ENCODE measurements at regions of chr22 and their contacts with region 1.

Region 1: GRCh38 chr22:39532215-39533071 is at the start of gene RPS19BP1:
- DNase-seq: peak; percentile 100
- H3K4me3 Mint-ChIP-seq: peak within 1 kb of the TSS; percentile 94
- H3K27ac Mint-ChIP-seq: peak within 1 kb of the TSS; percentile 86
- H3K4me1 Mint-ChIP-seq: peaks cover 59% of the 10 kb centered on the region
- H3K27me3 Mint-ChIP-seq: no peaks in the 10 kb centered on the region
- total RNA-seq, gene RPS19BP1: 54.3 to 60.7 TPM

Region 2: GRCh38 chr22:39490135-39490798 is 42.2 kb before region 1 on chr22:
- CTCF ChIA-PET with region 1: interaction called, 210 read pairs
- POLR2A ChIA-PET with region 1: interaction called, 23 read pairs
- DNase-seq: peak; percentile 82
- H3K4me3 Mint-ChIP-seq: no peak overlapping the region
- H3K27ac Mint-ChIP-seq: no peak overlapping the region
- H3K4me1 Mint-ChIP-seq: peaks cover 14% of the 10 kb centered on the region
- H3K27me3 Mint-ChIP-seq: peaks cover 2% of the 10 kb centered on the region

Region 3: GRCh38 chr22:39502109-39502788 is 30.2 kb before region 1 on chr22 and contains the start of gene MIEF1:
- CTCF ChIA-PET with region 1: interaction called, 210 read pairs
- POLR2A ChIA-PET with region 1: interaction called, 124 read pairs
- DNase-seq: peak; percentile 94
- H3K4me3 Mint-ChIP-seq: peak within 1 kb of the TSS; percentile 91
- H3K27ac Mint-ChIP-seq: peak within 1 kb of the TSS; percentile 92
- H3K4me1 Mint-ChIP-seq: peaks cover 41% of the 10 kb centered on the region
- H3K27me3 Mint-ChIP-seq: peaks cover 10% of the 10 kb centered on the region
- total RNA-seq, gene MIEF1: 32.4 to 32.6 TPM

Region 4: GRCh38 chr22:39520054-39520891 is 12.2 kb before region 1 on chr22 and contains the start of gene ATF4:
- CTCF ChIA-PET with region 1: interaction called, 65 read pairs
- POLR2A ChIA-PET with region 1: interaction called, 121 read pairs
- DNase-seq: peak; percentile 97
- H3K4me3 Mint-ChIP-seq: peak within 1 kb of the TSS; percentile 94
- H3K27ac Mint-ChIP-seq: peak within 1 kb of the TSS; percentile 99
- H3K4me1 Mint-ChIP-seq: peaks cover 58% of the 10 kb centered on the region
- H3K27me3 Mint-ChIP-seq: peaks cover 2% of the 10 kb centered on the region
- total RNA-seq, gene ATF4: 456 to 460 TPM

Region 5: GRCh38 chr22:40024201-40025061 is 492.0 kb after region 1 on chr22:
- CTCF ChIA-PET with region 1: interaction called, 90 read pairs
- POLR2A ChIA-PET with region 1: interaction called, 13 read pairs
- DNase-seq: peak; percentile 69
- H3K4me3 Mint-ChIP-seq: no peak overlapping the region
- H3K27ac Mint-ChIP-seq: no peak overlapping the region
- H3K4me1 Mint-ChIP-seq: peaks cover 5% of the 10 kb centered on the region
- H3K27me3 Mint-ChIP-seq: no peaks in the 10 kb centered on the region